HCT116 (cell line): ENCODE measurements at regions of chr22 and their contacts with region 1.

Region 1: GRCh38 chr22:21712894-21713712 is 22.5 kb downstream of the YPEL1 start:
- DNase-seq: peak; percentile 68
- ATAC-seq: peak; percentile 96
- H3K4me3 ChIP-seq: peak overlapping the region; percentile 23
- H3K27ac ChIP-seq: no peak overlapping the region
- H3K4me1 ChIP-seq: peaks cover 0 to 7% of the 10 kb centered on the region in 2 experiments; a peak in 1 of 4 replicates
- H3K27me3 ChIP-seq: no peaks in the 10 kb centered on the region
- CTCF ChIP-seq: peak; percentile 72 to 96 (median 80)
- POLR2A ChIP-seq: no peak
- RAD21 ChIP-seq: peak; percentile 72

Region 2: DNA sequence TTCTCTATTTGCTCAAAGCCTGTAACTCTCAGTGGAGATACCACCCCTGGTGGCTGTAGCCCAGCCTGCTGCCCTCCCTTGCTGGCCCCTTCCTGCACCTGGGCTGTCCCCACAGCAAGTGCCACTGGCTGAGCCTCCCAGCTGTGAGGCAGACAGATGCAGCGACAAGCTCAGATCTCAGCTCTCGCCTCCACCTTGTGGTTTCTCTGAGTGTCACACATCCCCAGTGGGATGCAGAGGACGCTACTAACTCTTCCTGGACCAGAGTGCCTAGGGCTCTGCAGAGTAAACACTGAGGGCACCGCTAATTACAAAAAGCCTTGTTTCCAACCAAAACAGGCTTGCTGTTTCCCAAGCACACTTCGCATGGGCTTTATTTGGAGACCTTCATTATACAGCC is 13.5 kb after region 1 on chr22:
- CTCF ChIA-PET with region 1: interaction called, 3 read pairs
- POLR2A ChIA-PET with region 1: no interaction called
- RAD21 ChIA-PET with region 1: no interaction called
- intact Hi-C with region 1: loop called (anchors 1 kb)
- DNase-seq: peak; percentile 28
- ATAC-seq: peak; percentile 99
- H3K4me3 ChIP-seq: no peak overlapping the region
- H3K27ac ChIP-seq: no peak overlapping the region
- H3K4me1 ChIP-seq: peaks cover 0 to 6% of the 10 kb centered on the region in 2 experiments; a peak in 1 of 4 replicates
- H3K27me3 ChIP-seq: no peaks in the 10 kb centered on the region
- CTCF ChIP-seq: peak in 2 of 3 experiments; percentile 58 to 63; a peak in 4 of 6 replicates
- POLR2A ChIP-seq: no peak
- RAD21 ChIP-seq: peak; percentile 49; the same call in 1 of the 2 replicates

Region 3: GRCh38 chr22:21938071-21938822 is 225.1 kb after region 1 on chr22:
- CTCF ChIA-PET with region 1: interaction called, 6 read pairs
- POLR2A ChIA-PET with region 1: no interaction called
- RAD21 ChIA-PET with region 1: interaction called in 1 of 2 experiments, 4 read pairs
- intact Hi-C with region 1: loop called (anchors 2 kb)
- DNase-seq: peak; percentile 69
- ATAC-seq: peak; percentile 91
- H3K4me3 ChIP-seq: peak overlapping the region; percentile 52 to 58
- H3K27ac ChIP-seq: peak overlapping the region; percentile 91
- H3K4me1 ChIP-seq: peaks cover 25 to 44% of the 10 kb centered on the region in 2 experiments
- H3K27me3 ChIP-seq: no peaks in the 10 kb centered on the region
- CTCF ChIP-seq: peak; percentile 93 to 98 (median 94)
- POLR2A ChIP-seq: no peak
- RAD21 ChIP-seq: peak; percentile 81

Region 4: GRCh38 chr22:21952586-21953571 is 239.8 kb after region 1 on chr22 and contains the start of gene PPM1F:
- CTCF ChIA-PET with region 1: interaction called, 3 read pairs
- POLR2A ChIA-PET with region 1: no interaction called
- RAD21 ChIA-PET with region 1: interaction called in 1 of 2 experiments, 3 read pairs
- intact Hi-C with region 1: loop called (anchors 2 kb)
- DNase-seq: no peak
- ATAC-seq: peak; percentile 90
- H3K4me3 ChIP-seq: peak within 1 kb of the TSS; percentile 62 to 82
- H3K27ac ChIP-seq: peak within 1 kb of the TSS; percentile 61; the same call in 1 of the 2 replicates
- H3K4me1 ChIP-seq: peaks cover 4 to 17% of the 10 kb centered on the region in 2 experiments; a peak in 2 of 4 replicates
- H3K27me3 ChIP-seq: no peaks in the 10 kb centered on the region
- CTCF ChIP-seq: peak; percentile 58 to 80 (median 74)
- POLR2A ChIP-seq: peak; percentile 47
- RAD21 ChIP-seq: peak; percentile 65
- total RNA-seq, gene PPM1F: 27.3 TPM